SK-N-SH (cell line): ENCODE measurements at regions of chr20 and their contacts with region 1.

Region 1: GRCh38 chr20:23340524-23340923 is 10.1 kb upstream of the NXT1 start:
- DNase-seq: peak; percentile 67
- H3K4me3 ChIP-seq: no peak overlapping the region
- H3K27ac ChIP-seq: no peak overlapping the region
- H3K4me1 ChIP-seq: no peaks in the 10 kb centered on the region; a peak in 1 of 4 replicates
- H3K27me3 ChIP-seq: peaks cover 31% of the 10 kb centered on the region; the same call in 1 of the 2 replicates
- CTCF ChIP-seq: peak; percentile 76
- EP300 ChIP-seq: no peak
- RAD21 ChIP-seq: peak; percentile 89

Region 2: DNA sequence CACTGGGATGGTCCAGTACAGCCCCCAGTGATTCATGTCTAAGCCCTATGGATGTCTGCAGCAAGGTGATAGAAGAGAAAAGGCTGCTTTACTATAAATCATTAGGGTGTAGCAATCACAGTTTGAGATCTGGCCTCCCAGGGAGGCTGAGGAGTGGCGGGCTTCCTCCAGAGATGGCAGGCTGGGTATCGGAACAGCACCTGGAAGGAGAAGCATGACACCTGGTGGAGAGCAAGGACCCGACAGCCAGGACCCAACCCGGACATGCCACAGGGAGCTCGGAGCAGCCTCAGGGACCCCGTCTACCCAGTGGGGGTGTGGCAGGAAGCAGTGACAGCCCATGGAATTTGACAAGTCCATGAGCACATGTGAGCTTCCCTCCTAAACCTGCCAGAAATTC is 139.6 kb before region 1 on chr20:
- CTCF ChIA-PET with region 1: no interaction called
- POLR2A ChIA-PET with region 1: no interaction called
- DNase-seq: peak; percentile 16
- H3K4me3 ChIP-seq: no peak overlapping the region
- H3K27ac ChIP-seq: no peak overlapping the region
- H3K4me1 ChIP-seq: no peaks in the 10 kb centered on the region
- H3K27me3 ChIP-seq: peaks cover 80% of the 10 kb centered on the region
- CTCF ChIP-seq: peak; percentile 51
- EP300 ChIP-seq: no peak
- RAD21 ChIP-seq: peak; percentile 46

Region 3: GRCh38 chr20:23320317-23320716 is 20.2 kb before region 1 on chr20:
- CTCF ChIA-PET with region 1: interaction called, 19 read pairs
- POLR2A ChIA-PET with region 1: no interaction called
- DNase-seq: peak; percentile 24
- H3K4me3 ChIP-seq: no peak overlapping the region
- H3K27ac ChIP-seq: no peak overlapping the region
- H3K4me1 ChIP-seq: no peaks in the 10 kb centered on the region
- H3K27me3 ChIP-seq: peaks cover 75% of the 10 kb centered on the region
- CTCF ChIP-seq: peak; percentile 57
- EP300 ChIP-seq: no peak
- RAD21 ChIP-seq: no peak